Panc1 (cell line): ENCODE measurements at regions of chr12 and their contacts with region 1.

Region 1: GRCh38 chr12:72017054-72017651 is 78.5 kb downstream of the TPH2 start:
- DNase-seq: peak; percentile 64
- ATAC-seq: peak; percentile 96
- H3K4me3 ChIP-seq: no peak overlapping the region
- H3K27ac ChIP-seq: no peak overlapping the region
- H3K4me1 ChIP-seq: no peaks in the 10 kb centered on the region
- H3K27me3 ChIP-seq: peaks cover 4% of the 10 kb centered on the region
- CTCF ChIP-seq: peak; percentile 85

Region 2: DNA sequence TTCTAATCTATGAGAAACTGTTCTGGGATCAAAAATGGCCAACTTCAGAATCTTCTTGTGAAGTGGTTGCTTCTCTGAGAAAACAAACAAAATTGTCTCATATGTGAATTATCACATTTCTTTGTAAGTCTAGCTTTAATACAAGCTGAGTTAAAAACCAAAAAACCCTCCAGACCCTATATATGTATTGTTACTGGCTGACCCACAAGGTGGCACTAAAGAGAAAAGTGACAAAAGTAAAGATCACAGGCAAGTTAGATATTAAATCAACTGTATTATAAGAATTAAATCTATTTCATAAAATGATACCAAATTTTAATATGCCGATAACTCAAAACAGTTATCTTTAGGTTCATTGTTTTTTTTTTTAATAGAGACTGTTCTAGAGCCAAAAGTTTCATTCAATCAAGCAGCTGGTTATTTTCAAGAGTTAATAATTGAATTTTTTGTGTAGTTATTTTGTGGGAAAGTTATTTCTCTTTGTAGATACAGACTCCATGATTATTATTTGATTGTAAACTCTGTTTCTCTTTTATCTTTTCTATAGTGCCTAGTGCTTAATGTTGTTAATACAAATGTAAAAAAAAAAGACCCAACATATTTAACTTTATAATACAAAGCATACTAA is 247.5 kb after region 1 on chr12:
- CTCF ChIA-PET with region 1: interaction called, 15 read pairs
- POLR2A ChIA-PET with region 1: no interaction called
- in situ Hi-C with region 1: no loop called
- intact Hi-C with region 1: no loop called
- DNase-seq: no peak
- ATAC-seq: no peak; the same call in 1 of the 2 replicates
- H3K4me3 ChIP-seq: no peak overlapping the region
- H3K27ac ChIP-seq: no peak overlapping the region
- H3K4me1 ChIP-seq: no peaks in the 10 kb centered on the region
- H3K27me3 ChIP-seq: peaks cover 14% of the 10 kb centered on the region
- CTCF ChIP-seq: peak; percentile 57; the same call in 1 of the 2 replicates

Region 3: DNA sequence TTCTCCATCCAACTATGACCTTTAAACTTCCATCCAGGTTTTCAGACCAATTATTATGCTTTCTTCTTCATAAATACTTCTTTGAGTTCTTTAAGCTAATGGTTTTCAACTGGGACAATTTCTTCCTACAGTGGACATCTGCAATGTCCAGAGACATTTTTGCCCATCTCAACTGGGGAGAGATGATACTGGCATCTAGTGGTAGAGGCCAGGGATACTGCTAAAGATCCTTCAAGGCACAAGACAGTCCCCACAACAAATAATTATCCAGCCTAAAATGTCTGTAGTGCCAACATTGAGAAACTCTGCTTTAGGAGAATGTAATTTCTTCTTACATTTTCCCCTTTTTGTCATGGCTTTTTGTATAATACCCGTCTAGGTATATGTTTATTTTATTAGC is 265.6 kb after region 1 on chr12:
- CTCF ChIA-PET with region 1: no interaction called
- POLR2A ChIA-PET with region 1: no interaction called
- in situ Hi-C with region 1: no loop called
- intact Hi-C with region 1: loop called (anchors 5 kb)
- DNase-seq: no peak
- ATAC-seq: no peak
- H3K4me3 ChIP-seq: no peak overlapping the region
- H3K27ac ChIP-seq: no peak overlapping the region
- H3K4me1 ChIP-seq: no peaks in the 10 kb centered on the region
- H3K27me3 ChIP-seq: peaks cover under 1% of the 10 kb centered on the region; the same call in 1 of the 2 replicates
- CTCF ChIP-seq: peak; percentile 68

Region 4: GRCh38 chr12:72815135-72815820 is 798.1 kb after region 1 on chr12:
- CTCF ChIA-PET with region 1: no interaction called
- POLR2A ChIA-PET with region 1: no interaction called
- in situ Hi-C with region 1: no loop called
- intact Hi-C with region 1: no loop called
- DNase-seq: no peak
- ATAC-seq: no peak
- H3K4me3 ChIP-seq: no peak overlapping the region
- H3K27ac ChIP-seq: no peak overlapping the region
- H3K4me1 ChIP-seq: no peaks in the 10 kb centered on the region
- H3K27me3 ChIP-seq: no peaks in the 10 kb centered on the region
- CTCF ChIP-seq: no peak